GM13976 (cell line): ENCODE measurements at regions of chr6 and their contacts with region 1.

Region 1: DNA sequence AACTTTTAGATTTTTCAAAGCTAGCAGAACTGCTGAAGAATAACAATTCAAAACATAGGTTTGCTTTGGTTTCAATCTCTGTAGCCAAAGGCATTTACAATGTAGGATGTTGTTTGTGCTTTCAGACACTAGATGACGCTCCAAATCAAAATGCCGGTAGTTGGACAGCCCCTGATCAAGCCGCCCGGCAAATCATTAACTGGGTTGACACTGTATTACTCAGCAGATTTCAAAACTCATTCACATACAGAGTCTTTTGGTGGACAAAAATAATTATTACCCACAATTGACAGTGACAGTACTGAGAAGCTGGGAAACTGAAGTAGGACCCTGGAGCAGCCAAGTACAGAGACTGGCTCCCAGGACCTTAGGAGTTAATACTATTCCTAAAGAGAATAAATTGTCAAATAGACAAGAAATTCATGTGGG is 21.3 kb upstream of the HFE start:
- DNase-seq: peak; percentile 75
- CTCF ChIP-seq: peak; percentile 63

Region 2: DNA sequence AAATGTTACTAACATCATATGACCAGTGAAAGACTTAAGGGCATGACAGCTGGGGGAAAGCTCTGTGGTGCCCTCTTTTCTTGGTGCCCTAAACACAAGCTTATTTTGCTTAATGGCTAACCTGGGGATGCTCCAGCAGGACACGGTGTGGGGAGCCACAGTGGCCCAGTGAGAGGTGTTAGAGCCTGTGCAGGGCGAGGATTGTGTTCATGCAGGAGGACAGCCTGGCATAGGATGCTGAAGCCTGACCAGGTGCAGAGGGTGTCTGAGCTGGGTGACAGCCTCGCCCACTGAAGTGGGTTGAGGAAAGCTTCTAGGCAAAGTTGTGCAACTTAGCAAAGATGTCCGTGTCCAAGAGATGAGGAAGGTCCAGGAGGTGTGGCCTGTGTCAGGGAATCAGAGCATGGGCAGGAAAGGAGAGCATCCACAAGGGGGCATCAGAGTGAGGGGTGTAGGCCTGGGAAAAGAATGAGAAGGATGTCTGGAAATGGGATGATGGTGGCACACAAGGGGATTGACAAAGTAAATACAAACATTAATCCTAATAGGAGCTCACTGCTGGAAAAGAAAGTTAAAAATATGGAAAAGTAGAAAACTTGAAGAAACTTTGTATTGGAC is 277.6 kb before region 1 on chr6:
- in situ Hi-C with region 1: no loop called
- DNase-seq: peak; percentile 11
- CTCF ChIP-seq: peak; percentile 53

Region 3: DNA sequence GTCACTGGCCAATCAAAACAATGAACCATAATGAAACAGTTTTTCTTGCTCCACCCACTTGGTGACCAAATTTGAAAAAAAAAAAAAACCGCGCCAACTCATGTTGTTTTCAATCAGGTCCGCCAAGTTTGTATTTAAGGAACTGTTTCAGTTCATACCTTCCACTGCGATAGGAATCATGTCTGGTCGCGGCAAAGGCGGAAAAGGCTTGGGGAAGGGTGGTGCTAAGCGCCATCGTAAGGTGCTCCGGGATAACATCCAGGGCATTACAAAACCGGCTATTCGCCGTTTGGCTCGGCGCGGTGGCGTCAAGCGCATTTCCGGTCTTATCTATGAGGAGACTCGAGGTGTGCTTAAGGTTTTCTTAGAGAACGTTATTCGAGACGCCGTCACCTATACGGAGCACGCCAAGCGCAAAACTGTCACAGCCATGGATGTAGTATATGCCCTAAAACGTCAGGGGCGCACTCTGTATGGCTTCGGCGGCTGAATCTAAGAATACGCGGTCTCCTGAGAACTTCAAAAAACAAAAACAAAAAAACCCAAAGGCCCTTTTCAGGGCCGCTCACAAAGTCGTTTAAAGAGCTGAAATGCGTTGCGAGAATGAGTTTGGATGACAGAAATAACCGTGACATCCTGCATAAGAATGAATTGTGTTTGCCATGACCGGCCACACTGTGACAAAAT is 37.9 kb after region 1 on chr6:
- in situ Hi-C with region 1: loop called (anchors 5 kb)
- DNase-seq: peak; percentile 76
- CTCF ChIP-seq: peak; percentile 38

Region 4: GRCh38 chr6:26322645-26323482 is 256.9 kb after region 1 on chr6:
- in situ Hi-C with region 1: no loop called
- DNase-seq: peak; percentile 55
- CTCF ChIP-seq: no peak